Activated CD4-positive, alpha-beta memory T cell treated with anti-CD3 and anti-CD28 coated beads, Interleukin-2, amount 10 ng/mL, durations not matched to agents 7 days and 5 days (primary cell): ENCODE measurements at regions of chr17 and their contacts with region 1.

Region 1: DNA sequence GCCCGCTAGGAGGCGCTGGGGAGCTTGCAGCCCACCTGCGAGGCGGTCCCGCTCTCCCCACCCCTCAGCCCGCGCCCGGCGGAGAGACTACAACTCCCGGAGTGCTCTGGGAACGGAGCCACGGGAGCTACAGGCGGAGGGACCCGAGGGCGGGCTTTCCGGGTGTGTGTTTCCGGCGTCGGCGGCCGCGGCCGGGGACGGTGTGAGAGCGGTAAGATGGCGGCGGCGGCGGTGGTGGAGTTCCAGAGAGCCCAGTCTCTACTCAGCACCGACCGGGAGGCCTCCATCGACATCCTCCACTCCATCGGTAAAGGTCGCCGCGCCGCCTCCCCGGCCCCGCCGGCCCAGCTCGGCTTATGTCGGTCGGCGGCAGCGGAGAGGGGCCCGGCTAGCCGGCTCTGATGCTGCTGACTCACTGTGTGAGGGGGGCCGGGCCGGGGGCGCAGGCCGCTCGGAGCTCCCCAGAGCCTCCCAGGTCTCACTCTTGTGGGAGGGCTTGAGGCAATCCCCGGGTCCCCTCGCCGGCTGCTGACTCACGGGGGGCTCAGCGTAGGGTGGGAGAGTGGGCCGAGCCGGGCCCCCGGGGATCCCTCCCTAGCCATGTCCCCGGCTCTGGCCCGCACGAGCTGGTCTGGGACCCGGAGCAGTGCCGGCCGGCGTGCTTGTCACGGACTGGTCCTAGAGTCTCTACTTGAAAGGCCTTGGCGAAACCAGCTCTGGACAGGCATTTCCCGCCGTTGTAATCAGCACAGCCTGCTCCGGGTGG is at the start of gene PSMD11:
- DNase-seq: peak; percentile 99
- H3K4me3 Mint-ChIP-seq: peak within 1 kb of the TSS; percentile 83
- H3K27ac Mint-ChIP-seq: peak within 1 kb of the TSS; percentile 76
- H3K4me1 Mint-ChIP-seq: peaks cover 54% of the 10 kb centered on the region
- H3K27me3 Mint-ChIP-seq: peaks cover 8% of the 10 kb centered on the region
- total RNA-seq, gene PSMD11: 105 to 110 TPM

Region 2: GRCh38 chr17:32341857-32342602 is 102.5 kb before region 1 on chr17 and contains the start of gene C17orf75:
- CTCF ChIA-PET with region 1: interaction called, 5 read pairs
- POLR2A ChIA-PET with region 1: interaction called, 12 read pairs
- DNase-seq: peak; percentile 82
- H3K4me3 Mint-ChIP-seq: peak within 1 kb of the TSS; percentile 95
- H3K27ac Mint-ChIP-seq: peak within 1 kb of the TSS; percentile 93
- H3K4me1 Mint-ChIP-seq: peaks cover 36% of the 10 kb centered on the region
- H3K27me3 Mint-ChIP-seq: no peaks in the 10 kb centered on the region
- total RNA-seq, gene C17orf75: 32.1 to 35.1 TPM

Region 3: GRCh38 chr17:32349854-32350665 is 94.4 kb before region 1 on chr17 and contains the start of gene ZNF207:
- CTCF ChIA-PET with region 1: interaction called, 11 read pairs
- POLR2A ChIA-PET with region 1: interaction called, 9 read pairs
- DNase-seq: peak; percentile 96
- H3K4me3 Mint-ChIP-seq: peak within 1 kb of the TSS; percentile 97
- H3K27ac Mint-ChIP-seq: peak within 1 kb of the TSS; percentile 99
- H3K4me1 Mint-ChIP-seq: peaks cover 38% of the 10 kb centered on the region
- H3K27me3 Mint-ChIP-seq: no peaks in the 10 kb centered on the region
- total RNA-seq, gene ZNF207: 238 to 257 TPM

Region 4: GRCh38 chr17:32429598-32429997 is 14.9 kb before region 1 on chr17:
- CTCF ChIA-PET with region 1: interaction called, 12 read pairs
- POLR2A ChIA-PET with region 1: interaction called, 3 read pairs
- DNase-seq: no peak
- H3K4me3 Mint-ChIP-seq: no peak overlapping the region
- H3K27ac Mint-ChIP-seq: no peak overlapping the region
- H3K4me1 Mint-ChIP-seq: no peaks in the 10 kb centered on the region
- H3K27me3 Mint-ChIP-seq: no peaks in the 10 kb centered on the region

Region 5: DNA sequence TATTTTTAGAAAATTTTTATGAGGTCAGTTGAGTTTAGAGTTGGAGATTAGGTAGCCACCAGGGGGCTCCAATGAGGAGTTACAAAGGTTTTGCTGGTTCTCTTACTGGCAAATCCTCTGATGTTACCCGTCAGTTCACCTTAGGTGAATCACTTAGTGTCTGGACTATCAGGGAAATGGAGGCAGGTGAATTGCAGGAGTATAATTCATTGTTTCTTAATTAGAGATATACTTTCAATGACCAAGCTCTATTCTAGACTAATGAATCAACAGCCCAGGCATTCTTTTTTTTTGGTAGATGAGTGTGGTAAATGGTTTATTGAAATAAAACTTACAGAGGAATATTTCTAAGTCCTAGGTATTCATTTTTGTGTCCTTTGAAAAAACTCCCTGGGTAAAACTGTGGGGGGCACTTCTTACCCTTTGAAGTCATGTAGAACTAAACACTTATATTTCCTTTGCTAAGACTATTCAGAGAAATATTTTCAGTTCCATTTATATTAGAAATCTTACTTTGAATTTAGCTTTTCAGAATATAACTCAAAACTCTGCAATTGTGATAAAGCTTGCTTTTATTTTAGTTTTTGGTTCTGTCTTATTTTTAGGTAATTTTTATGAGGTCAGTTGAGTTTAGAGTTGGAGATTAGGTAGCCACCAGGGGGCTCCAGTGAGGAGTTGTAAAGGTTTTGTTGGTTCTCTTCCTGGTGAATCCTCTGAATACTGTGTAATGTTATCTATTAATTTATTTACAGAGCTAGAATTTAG is 17.5 kb after region 1 on chr17:
- CTCF ChIA-PET with region 1: interaction called, 102 read pairs
- POLR2A ChIA-PET with region 1: interaction called, 9 read pairs
- DNase-seq: peak; percentile 71
- H3K4me3 Mint-ChIP-seq: no peak overlapping the region
- H3K27ac Mint-ChIP-seq: peak overlapping the region; percentile 37
- H3K4me1 Mint-ChIP-seq: peaks cover 23% of the 10 kb centered on the region
- H3K27me3 Mint-ChIP-seq: no peaks in the 10 kb centered on the region

Region 6: GRCh38 chr17:32486111-32486700 is 41.7 kb after region 1 on chr17:
- CTCF ChIA-PET with region 1: no interaction called
- POLR2A ChIA-PET with region 1: interaction called, 16 read pairs
- DNase-seq: peak; percentile 67
- H3K4me3 Mint-ChIP-seq: peak overlapping the region; percentile 63
- H3K27ac Mint-ChIP-seq: no peak overlapping the region
- H3K4me1 Mint-ChIP-seq: peaks cover 42% of the 10 kb centered on the region
- H3K27me3 Mint-ChIP-seq: no peaks in the 10 kb centered on the region